ENCODE measurements at regions of chr6 and their contacts with region 1.

Region 1: DNA sequence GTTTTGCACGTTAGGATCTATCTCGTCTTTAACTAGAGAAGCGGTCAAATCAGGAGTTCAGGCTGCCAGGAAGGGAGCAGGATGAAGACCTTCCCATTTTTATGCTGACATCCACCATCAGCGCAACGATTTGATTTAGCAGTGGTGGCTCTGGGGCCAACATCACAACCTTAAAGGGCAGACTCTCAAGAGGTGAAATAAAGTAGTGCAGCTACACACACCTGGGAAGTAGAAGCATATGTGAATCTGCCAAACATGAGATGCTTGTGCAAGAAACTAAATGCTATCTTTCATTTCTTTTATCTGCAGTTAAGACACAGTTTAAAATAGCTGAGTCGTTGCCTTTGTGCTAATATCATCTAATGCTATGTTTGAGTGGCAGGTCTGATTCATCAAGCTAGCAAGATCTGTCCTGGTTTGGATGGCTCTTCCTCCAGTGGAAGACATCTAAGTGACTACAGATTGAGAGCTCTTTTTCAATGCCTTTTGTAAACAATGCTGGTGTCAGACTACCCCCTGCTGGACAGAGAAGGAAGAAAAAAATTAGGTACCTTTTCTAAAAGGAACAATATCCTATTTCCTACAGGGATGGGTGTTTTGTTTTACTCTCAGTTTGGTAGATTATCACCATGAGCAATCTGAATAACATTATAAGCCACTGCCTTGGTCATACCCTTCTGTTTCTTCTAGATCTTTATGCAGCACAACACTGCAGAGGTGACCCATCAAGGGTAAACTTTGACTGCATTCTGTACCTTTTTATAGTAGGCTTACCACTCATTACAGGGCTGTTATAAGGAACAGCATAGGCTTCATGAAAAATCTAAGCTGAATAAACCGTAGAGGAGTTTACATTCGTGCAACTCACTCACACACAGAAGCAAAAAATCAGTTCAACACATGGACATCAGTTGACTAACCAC is 171.6 kb upstream of the FBXL4 start:
- H3K4me3 ChIP-seq: no peak overlapping the region
- H3K27ac ChIP-seq: no peak overlapping the region
- H3K4me1 ChIP-seq: no peaks in the 10 kb centered on the region
- CTCF ChIP-seq: no peak; the same call in 1 of the 2 replicates

Region 2: GRCh38 chr6:98769544-98769943 is 349.8 kb before region 1 on chr6:
- CTCF ChIA-PET with region 1: interaction called, 16 read pairs
- POLR2A ChIA-PET with region 1: no interaction called
- H3K4me3 ChIP-seq: no peak overlapping the region
- H3K27ac ChIP-seq: no peak overlapping the region
- H3K4me1 ChIP-seq: no peaks in the 10 kb centered on the region
- CTCF ChIP-seq: peak; percentile 29; the same call in 1 of the 2 replicates

Region 3: GRCh38 chr6:99092009-99092408 is 27.4 kb before region 1 on chr6:
- CTCF ChIA-PET with region 1: interaction called, 10 read pairs
- POLR2A ChIA-PET with region 1: no interaction called
- H3K4me3 ChIP-seq: no peak overlapping the region
- H3K27ac ChIP-seq: no peak overlapping the region
- H3K4me1 ChIP-seq: no peaks in the 10 kb centered on the region
- CTCF ChIP-seq: no peak

Region 4: DNA sequence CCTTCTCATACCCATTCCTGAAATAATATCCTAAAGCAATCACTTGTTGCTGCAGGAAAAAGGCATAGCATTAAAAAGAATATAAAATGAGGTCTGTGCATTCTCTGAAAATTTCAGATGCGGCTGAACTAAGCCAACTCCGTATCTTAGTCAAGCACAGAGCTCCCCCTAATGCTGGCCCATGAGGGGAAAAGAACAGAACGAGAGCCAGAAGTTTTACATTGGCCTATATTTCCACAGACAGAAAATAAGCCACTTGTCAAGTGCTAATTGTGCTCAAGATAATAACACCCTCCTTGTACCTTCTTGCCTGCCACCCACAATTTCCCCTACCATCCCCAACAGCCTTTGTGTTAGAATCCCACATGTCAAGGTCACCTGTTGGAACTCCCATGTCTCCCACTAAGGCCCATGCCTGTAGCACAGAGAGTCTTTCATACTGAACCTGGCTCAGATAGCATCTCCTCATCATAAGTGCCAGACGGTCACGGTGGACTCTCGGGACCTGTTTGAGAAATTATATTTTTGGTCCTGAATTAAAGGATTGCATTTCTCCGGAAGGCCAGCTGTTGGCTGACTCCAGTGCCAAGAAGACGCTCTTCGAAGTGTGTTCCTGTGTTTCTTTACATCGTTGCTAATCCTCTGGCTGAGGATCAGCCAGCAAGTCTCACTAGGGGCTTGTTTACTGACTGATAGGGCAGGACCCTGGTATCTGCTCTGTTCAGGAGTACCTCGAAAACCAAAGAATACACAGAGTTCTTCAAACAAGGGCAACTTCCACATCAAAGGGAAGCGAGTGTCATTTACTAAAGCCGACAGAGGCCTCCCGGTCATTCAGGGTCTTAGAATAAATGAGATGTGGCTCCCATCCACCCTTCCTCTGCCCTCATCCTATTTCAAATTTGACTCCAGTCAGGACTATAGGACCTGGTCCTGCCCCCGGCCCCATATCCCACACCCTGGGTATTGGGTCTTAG is 11.8 kb after region 1 on chr6:
- CTCF ChIA-PET with region 1: interaction called, 17 read pairs
- POLR2A ChIA-PET with region 1: no interaction called
- H3K4me3 ChIP-seq: no peak overlapping the region
- H3K27ac ChIP-seq: no peak overlapping the region
- H3K4me1 ChIP-seq: no peaks in the 10 kb centered on the region
- CTCF ChIP-seq: no peak

Region 5: DNA sequence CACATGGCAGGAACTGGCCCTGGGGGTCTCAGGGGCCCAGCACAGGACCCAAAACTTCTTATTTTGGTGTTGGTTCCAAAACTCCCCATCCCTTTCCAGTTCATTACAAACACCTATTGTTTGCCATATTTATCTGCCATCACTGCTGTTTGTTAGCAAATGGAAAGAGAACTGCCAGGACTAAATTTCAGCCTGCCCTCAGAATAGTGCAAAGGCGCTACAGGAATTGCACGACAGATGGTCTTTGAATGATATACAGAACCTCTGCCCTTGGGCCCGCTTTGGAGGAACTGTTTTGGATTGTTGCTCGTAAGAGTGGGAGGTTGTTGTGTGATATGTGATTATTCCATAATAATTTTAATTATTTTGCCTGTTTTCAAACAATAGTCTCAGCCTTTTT is 27.3 kb after region 1 on chr6:
- CTCF ChIA-PET with region 1: interaction called, 15 read pairs
- POLR2A ChIA-PET with region 1: no interaction called
- H3K4me3 ChIP-seq: no peak overlapping the region
- H3K27ac ChIP-seq: no peak overlapping the region
- H3K4me1 ChIP-seq: no peaks in the 10 kb centered on the region
- CTCF ChIP-seq: no peak

Region 6: GRCh38 chr6:99241905-99242534 is 122.7 kb after region 1 on chr6:
- CTCF ChIA-PET with region 1: interaction called, 19 read pairs
- POLR2A ChIA-PET with region 1: no interaction called
- H3K4me3 ChIP-seq: no peak overlapping the region
- H3K27ac ChIP-seq: no peak overlapping the region
- H3K4me1 ChIP-seq: no peaks in the 10 kb centered on the region
- CTCF ChIP-seq: no peak; the same call in 1 of the 2 replicates

Region 7: GRCh38 chr6:99416892-99417767 is 297.8 kb after region 1 on chr6:
- CTCF ChIA-PET with region 1: no interaction called
- POLR2A ChIA-PET with region 1: no interaction called
- H3K4me3 ChIP-seq: no peak overlapping the region
- H3K27ac ChIP-seq: no peak overlapping the region
- H3K4me1 ChIP-seq: peaks cover 4% of the 10 kb centered on the region; the same call in 1 of the 2 replicates
- CTCF ChIP-seq: no peak